ENCODE measurements at regions of chr4 and their contacts with region 1.

Region 1: DNA sequence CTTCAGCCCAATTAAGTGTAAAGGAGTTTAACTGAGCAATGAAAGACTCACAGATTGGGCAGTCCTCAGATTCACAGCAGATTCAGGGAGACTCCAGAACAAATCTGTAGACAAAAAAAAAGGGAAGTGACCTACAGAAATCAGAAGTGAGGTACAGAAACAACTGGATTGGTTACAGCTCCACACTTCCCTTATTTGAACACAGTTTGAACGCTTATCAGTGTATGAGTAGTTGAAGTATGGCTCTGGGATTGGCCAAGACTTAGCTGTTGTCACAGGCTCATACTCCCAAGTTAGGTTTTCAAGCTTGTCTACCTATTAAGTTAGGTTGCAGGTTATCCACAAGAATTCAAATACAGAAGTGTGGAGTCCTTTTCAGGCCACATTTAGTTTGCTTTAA is 112.4 kb upstream of the ELOVL6 start:
- DNase-seq: no peak
- ATAC-seq: no peak
- H3K4me3 ChIP-seq: no peak overlapping the region
- H3K27ac ChIP-seq: no peak overlapping the region
- H3K4me1 ChIP-seq: no peaks in the 10 kb centered on the region
- H3K27me3 ChIP-seq: no peaks in the 10 kb centered on the region
- CTCF ChIP-seq: no peak

Region 2: GRCh38 chr4:110005461-110006056 is 305.2 kb before region 1 on chr4:
- CTCF ChIA-PET with region 1: no interaction called
- POLR2A ChIA-PET with region 1: no interaction called
- in situ Hi-C with region 1: no loop called
- intact Hi-C with region 1: loop called (anchors 10 kb)
- DNase-seq: peak; percentile 24
- ATAC-seq: no peak
- H3K4me3 ChIP-seq: no peak overlapping the region
- H3K27ac ChIP-seq: no peak overlapping the region
- H3K4me1 ChIP-seq: no peaks in the 10 kb centered on the region
- H3K27me3 ChIP-seq: no peaks in the 10 kb centered on the region
- CTCF ChIP-seq: peak; percentile 65

Region 3: GRCh38 chr4:110184140-110184790 is 126.5 kb before region 1 on chr4:
- CTCF ChIA-PET with region 1: no interaction called
- POLR2A ChIA-PET with region 1: no interaction called
- in situ Hi-C with region 1: no loop called
- intact Hi-C with region 1: no loop called
- DNase-seq: no peak
- ATAC-seq: no peak
- H3K4me3 ChIP-seq: no peak overlapping the region
- H3K27ac ChIP-seq: no peak overlapping the region
- H3K4me1 ChIP-seq: no peaks in the 10 kb centered on the region
- H3K27me3 ChIP-seq: no peaks in the 10 kb centered on the region
- CTCF ChIP-seq: no peak

Region 4: GRCh38 chr4:110510955-110511544 is 200.3 kb after region 1 on chr4:
- CTCF ChIA-PET with region 1: interaction called, 3 read pairs
- POLR2A ChIA-PET with region 1: no interaction called
- in situ Hi-C with region 1: no loop called
- intact Hi-C with region 1: loop called (anchors 5 kb)
- DNase-seq: no peak
- ATAC-seq: no peak
- H3K4me3 ChIP-seq: no peak overlapping the region
- H3K27ac ChIP-seq: no peak overlapping the region
- H3K4me1 ChIP-seq: no peaks in the 10 kb centered on the region
- H3K27me3 ChIP-seq: no peaks in the 10 kb centered on the region
- CTCF ChIP-seq: peak; percentile 49; the same call in 1 of the 2 replicates

Region 5: GRCh38 chr4:111854494-111855087 is 1543.8 kb after region 1 on chr4:
- CTCF ChIA-PET with region 1: no interaction called
- POLR2A ChIA-PET with region 1: no interaction called
- in situ Hi-C with region 1: no loop called
- intact Hi-C with region 1: no loop called
- DNase-seq: peak; percentile 8
- ATAC-seq: no peak
- H3K4me3 ChIP-seq: no peak overlapping the region
- H3K27ac ChIP-seq: no peak overlapping the region
- H3K4me1 ChIP-seq: no peaks in the 10 kb centered on the region
- H3K27me3 ChIP-seq: no peaks in the 10 kb centered on the region
- CTCF ChIP-seq: peak; percentile 61; the same call in 1 of the 2 replicates

Measured in Panc1 (cell line).